B cell (primary cell): ENCODE measurements at regions of chr1 and their contacts with region 1.

Region 1: GRCh38 chr1:66929999-66930822 is 5.4 kb downstream of the MIER1 start:
- DNase-seq: peak; percentile 96
- ATAC-seq: peak; percentile 77
- H3K4me3 ChIP-seq: peak overlapping the region; percentile 79 to 92 (median 86)
- H3K4me3 Mint-ChIP-seq: peak overlapping the region; percentile 94
- H3K27ac ChIP-seq: peak overlapping the region; percentile 82 to 95
- H3K27ac Mint-ChIP-seq: peak overlapping the region; percentile 93
- H3K4me1 ChIP-seq: peaks cover 29 to 46% of the 10 kb centered on the region in 2 donors
- H3K4me1 Mint-ChIP-seq: peaks cover 53% of the 10 kb centered on the region
- H3K27me3 ChIP-seq: no peaks in the 10 kb centered on the region
- H3K27me3 Mint-ChIP-seq: no peaks in the 10 kb centered on the region
- CTCF ChIP-seq: peak; percentile 37

Region 2: GRCh38 chr1:65059930-65060538 is 1870.2 kb before region 1 on chr1:
- CTCF ChIA-PET with region 1: no interaction called
- POLR2A ChIA-PET with region 1: no interaction called
- intact Hi-C with region 1: loop called (anchors 5 kb)
- DNase-seq: peak; percentile 51
- ATAC-seq: no peak
- H3K4me3 ChIP-seq: no peak overlapping the region
- H3K4me3 Mint-ChIP-seq: no peak overlapping the region
- H3K27ac ChIP-seq: no peak overlapping the region
- H3K27ac Mint-ChIP-seq: no peak overlapping the region
- H3K4me1 ChIP-seq: peaks cover 0 to 4% of the 10 kb centered on the region in 2 donors
- H3K4me1 Mint-ChIP-seq: peaks cover 40% of the 10 kb centered on the region
- H3K27me3 ChIP-seq: no peaks in the 10 kb centered on the region
- H3K27me3 Mint-ChIP-seq: no peaks in the 10 kb centered on the region
- CTCF ChIP-seq: peak; percentile 79

Region 3: GRCh38 chr1:66981679-66982078 is 51.5 kb after region 1 on chr1:
- CTCF ChIA-PET with region 1: interaction called, 3 read pairs
- POLR2A ChIA-PET with region 1: no interaction called
- intact Hi-C with region 1: loop called (anchors 5 kb)
- DNase-seq: peak; percentile 29
- ATAC-seq: no peak
- H3K4me3 ChIP-seq: peak overlapping the region in 1 of 5 experiments; percentile 5
- H3K4me3 Mint-ChIP-seq: peak overlapping the region; percentile 41
- H3K27ac ChIP-seq: peak overlapping the region in 1 of 2 donors; percentile 74
- H3K27ac Mint-ChIP-seq: no peak overlapping the region
- H3K4me1 ChIP-seq: peaks cover 0 to 6% of the 10 kb centered on the region in 2 donors
- H3K4me1 Mint-ChIP-seq: peaks cover 14% of the 10 kb centered on the region
- H3K27me3 ChIP-seq: no peaks in the 10 kb centered on the region
- H3K27me3 Mint-ChIP-seq: no peaks in the 10 kb centered on the region
- CTCF ChIP-seq: no peak

Region 4: DNA sequence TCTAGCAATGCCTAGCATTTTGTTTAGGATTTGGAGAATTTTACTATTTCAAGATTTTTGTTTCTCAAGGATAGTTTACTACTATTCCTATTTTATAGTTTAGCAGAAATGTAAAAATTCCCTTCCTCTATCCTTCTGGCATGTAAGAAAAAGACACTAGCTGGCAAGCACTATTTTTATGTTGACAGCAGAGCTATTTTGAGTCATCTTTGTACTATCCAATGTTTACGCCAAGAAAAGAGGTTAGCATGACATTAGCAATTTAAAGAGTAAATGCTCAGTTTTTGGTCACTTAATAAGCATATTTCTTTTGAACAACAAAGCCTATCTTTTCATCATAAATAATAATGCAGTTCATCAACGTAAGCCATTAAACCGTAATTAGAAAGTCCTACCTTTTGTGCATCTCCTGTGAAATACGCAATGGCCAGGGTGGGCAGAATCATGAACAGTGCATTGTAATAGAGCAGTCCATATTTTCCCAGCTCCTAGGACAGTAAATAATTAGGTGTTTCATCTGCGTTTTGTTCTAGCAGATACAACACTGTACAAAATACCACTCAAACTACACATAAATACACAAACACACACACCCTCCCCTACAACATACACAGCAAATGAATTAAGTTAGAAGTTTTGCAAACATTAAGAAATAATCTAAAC is 111.8 kb after region 1 on chr1:
- CTCF ChIA-PET with region 1: no interaction called
- POLR2A ChIA-PET with region 1: no interaction called
- intact Hi-C with region 1: no loop called
- DNase-seq: no peak
- ATAC-seq: no peak
- H3K4me3 ChIP-seq: no peak overlapping the region
- H3K4me3 Mint-ChIP-seq: no peak overlapping the region
- H3K27ac ChIP-seq: no peak overlapping the region
- H3K27ac Mint-ChIP-seq: no peak overlapping the region
- H3K4me1 ChIP-seq: peaks cover 4 to 9% of the 10 kb centered on the region in 2 donors
- H3K4me1 Mint-ChIP-seq: peaks cover 17% of the 10 kb centered on the region
- H3K27me3 ChIP-seq: no peaks in the 10 kb centered on the region
- H3K27me3 Mint-ChIP-seq: no peaks in the 10 kb centered on the region
- CTCF ChIP-seq: no peak

Region 5: GRCh38 chr1:67110352-67110751 is 180.1 kb after region 1 on chr1:
- CTCF ChIA-PET with region 1: no interaction called
- POLR2A ChIA-PET with region 1: interaction called, 3 read pairs
- intact Hi-C with region 1: loop called (anchors 10 kb)
- DNase-seq: peak; percentile 61
- ATAC-seq: peak; percentile 34
- H3K4me3 ChIP-seq: peak overlapping the region in 1 of 5 experiments; percentile 26
- H3K4me3 Mint-ChIP-seq: peak overlapping the region; percentile 14
- H3K27ac ChIP-seq: no peak overlapping the region
- H3K27ac Mint-ChIP-seq: no peak overlapping the region
- H3K4me1 ChIP-seq: peaks cover 27 to 38% of the 10 kb centered on the region in 2 donors
- H3K4me1 Mint-ChIP-seq: peaks cover 40% of the 10 kb centered on the region
- H3K27me3 ChIP-seq: no peaks in the 10 kb centered on the region
- H3K27me3 Mint-ChIP-seq: no peaks in the 10 kb centered on the region
- CTCF ChIP-seq: no peak